Activated CD4-positive, alpha-beta T cell treated with anti-CD3 and anti-CD28 coated beads, Interleukin-2, amount 10 ng/mL, durations not matched to agents 7 days and 5 days (primary cell): ENCODE measurements at regions of chr1 and their contacts with region 1.

Region 1: DNA sequence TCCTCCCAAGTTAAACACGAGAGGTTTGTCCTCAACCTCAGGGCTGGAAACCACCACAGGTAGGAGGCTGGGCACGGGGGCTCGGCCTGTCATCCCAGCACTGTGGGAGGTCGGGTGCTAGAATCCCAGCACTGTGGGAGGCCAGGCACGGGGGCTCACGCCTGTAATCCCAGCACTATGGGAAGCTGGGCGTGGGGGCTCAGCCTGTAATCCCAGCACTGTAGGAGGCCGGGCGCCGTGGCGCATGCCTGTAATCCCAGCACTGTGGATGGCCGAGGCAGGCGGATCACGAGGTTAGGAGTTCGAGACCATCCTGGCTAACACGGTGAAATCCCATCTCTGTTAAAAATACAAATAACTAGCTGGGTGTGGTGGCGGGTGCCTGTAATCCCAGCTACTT is 6.7 kb upstream of the CDK11A start:
- DNase-seq: no peak
- H3K4me3 Mint-ChIP-seq: no peak overlapping the region
- H3K27ac Mint-ChIP-seq: peak overlapping the region; percentile 31
- H3K4me1 Mint-ChIP-seq: peaks cover 27% of the 10 kb centered on the region
- H3K27me3 Mint-ChIP-seq: no peaks in the 10 kb centered on the region

Region 2: DNA sequence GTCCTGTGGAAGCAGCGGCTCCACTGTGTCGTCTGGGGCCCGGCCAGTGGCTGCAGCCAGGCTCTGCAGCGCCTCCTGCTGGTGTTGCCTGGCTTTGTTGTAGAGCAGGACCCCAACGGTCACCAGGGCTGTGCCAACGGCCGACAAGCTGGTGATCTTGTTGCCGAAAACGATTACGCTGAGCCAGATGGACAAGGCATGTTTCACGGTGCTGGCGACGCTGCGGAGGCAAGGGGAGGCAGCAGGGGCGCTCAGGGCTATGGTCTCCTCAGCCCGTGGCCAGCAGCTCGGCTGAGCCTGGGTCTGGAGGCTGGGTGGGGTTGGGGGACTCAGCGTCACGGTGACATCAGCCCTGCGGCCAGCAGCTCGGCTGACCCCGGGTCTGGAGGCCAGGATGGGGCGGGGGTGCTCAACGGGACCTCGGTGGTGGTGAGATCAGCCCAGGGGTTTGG is 65.0 kb before region 1 on chr1:
- CTCF ChIA-PET with region 1: interaction called, 13 read pairs
- POLR2A ChIA-PET with region 1: no interaction called
- DNase-seq: peak; percentile 17
- H3K4me3 Mint-ChIP-seq: no peak overlapping the region
- H3K27ac Mint-ChIP-seq: no peak overlapping the region
- H3K4me1 Mint-ChIP-seq: peaks cover 19% of the 10 kb centered on the region
- H3K27me3 Mint-ChIP-seq: no peaks in the 10 kb centered on the region

Region 3: DNA sequence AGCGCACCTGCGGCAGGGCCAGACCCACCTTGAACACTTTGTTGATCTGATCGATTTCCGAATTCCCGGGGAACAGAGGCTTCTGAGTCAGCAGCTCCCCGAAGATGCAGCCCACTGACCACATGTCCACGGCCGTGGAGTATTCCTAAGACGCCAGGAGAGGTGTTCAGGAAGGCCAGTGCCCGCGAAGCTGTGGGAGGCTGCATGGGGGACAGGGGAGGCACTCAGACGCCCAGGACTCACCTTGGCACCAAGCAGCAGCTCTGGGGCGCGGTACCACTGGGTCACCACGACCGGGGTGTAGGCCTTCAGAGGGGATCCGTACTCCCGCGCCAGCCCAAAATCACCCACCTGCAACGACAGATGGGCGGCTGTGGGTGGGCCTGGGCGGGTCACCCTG is 27.1 kb before region 1 on chr1:
- CTCF ChIA-PET with region 1: no interaction called
- POLR2A ChIA-PET with region 1: no interaction called
- DNase-seq: no peak
- H3K4me3 Mint-ChIP-seq: no peak overlapping the region
- H3K27ac Mint-ChIP-seq: no peak overlapping the region
- H3K4me1 Mint-ChIP-seq: no peaks in the 10 kb centered on the region
- H3K27me3 Mint-ChIP-seq: peaks cover 2% of the 10 kb centered on the region

Region 4: DNA sequence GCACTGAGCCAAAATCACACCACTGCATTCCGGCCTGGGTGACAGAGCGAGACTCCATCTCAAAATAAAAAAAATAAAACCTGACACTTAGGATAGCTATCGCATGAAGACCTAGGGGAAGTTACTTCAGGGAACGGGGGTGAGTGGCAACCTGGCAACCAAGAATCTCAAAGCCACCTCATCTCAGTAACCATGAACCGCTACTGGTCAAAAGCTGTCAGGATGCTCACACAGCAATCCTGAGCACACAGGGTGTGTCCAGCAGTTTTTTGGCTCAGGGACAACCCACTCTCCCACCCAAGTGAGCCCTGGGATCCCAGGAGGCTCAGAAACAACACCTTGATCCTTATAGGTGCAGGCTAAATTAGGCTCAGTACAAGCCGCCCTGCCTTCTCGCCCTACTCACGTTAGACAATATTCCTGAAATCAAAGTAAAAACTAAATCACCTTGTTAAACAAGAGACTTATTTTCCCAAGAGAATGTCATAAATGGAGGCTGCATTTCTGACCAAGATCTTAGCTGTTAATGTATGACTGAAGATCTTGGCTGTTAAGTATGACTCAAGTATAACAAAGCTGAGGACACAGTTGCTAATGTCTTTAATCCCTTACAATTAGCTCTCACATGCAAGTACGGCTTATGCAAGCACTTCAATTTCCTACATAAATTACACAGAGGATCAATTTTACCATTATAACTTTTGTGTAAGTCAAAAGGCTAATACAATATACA is 95.7 kb after region 1 on chr1:
- CTCF ChIA-PET with region 1: no interaction called
- POLR2A ChIA-PET with region 1: no interaction called
- DNase-seq: no peak
- H3K4me3 Mint-ChIP-seq: no peak overlapping the region
- H3K27ac Mint-ChIP-seq: peak overlapping the region; percentile 7
- H3K4me1 Mint-ChIP-seq: peaks cover 34% of the 10 kb centered on the region
- H3K27me3 Mint-ChIP-seq: no peaks in the 10 kb centered on the region